ENCODE measurements at regions of chr17 and their contacts with region 1.

Region 1: GRCh38 chr17:27293898-27294688 is at the start of gene WSB1:
- DNase-seq: peak; percentile 89
- H3K4me3 Mint-ChIP-seq: peak within 1 kb of the TSS; percentile 89
- H3K27ac Mint-ChIP-seq: peak within 1 kb of the TSS; percentile 96
- H3K4me1 Mint-ChIP-seq: peaks cover 12% of the 10 kb centered on the region
- H3K27me3 Mint-ChIP-seq: no peaks in the 10 kb centered on the region
- CTCF ChIP-seq: no peak
- total RNA-seq, gene WSB1: 93.1 and 145 TPM in 2 replicates

Region 2: DNA sequence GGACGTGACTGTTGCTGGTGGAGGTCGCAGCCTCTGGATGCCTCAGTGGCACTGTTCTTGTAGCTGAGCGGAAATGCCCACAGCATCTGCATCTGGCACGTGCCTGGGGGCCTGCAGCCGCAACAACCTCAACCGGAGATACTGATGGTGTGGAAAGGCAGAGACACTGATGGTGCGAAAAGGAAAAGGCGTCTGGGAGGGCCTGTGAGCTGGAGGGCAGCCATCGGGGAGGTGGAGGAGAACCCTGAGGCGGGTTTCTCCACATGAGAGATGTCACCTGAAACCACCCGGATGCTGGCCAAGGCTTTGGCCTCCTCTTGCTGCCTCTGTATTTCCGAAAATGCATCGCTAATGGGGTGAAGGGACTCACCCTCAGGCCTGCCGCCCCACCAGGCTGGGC is 285.0 kb before region 1 on chr17:
- CTCF ChIA-PET with region 1: no interaction called
- POLR2A ChIA-PET with region 1: no interaction called
- intact Hi-C with region 1: no loop called
- DNase-seq: no peak
- H3K4me3 Mint-ChIP-seq: no peak overlapping the region
- H3K27ac Mint-ChIP-seq: no peak overlapping the region
- H3K4me1 Mint-ChIP-seq: no peaks in the 10 kb centered on the region
- H3K27me3 Mint-ChIP-seq: no peaks in the 10 kb centered on the region
- CTCF ChIP-seq: no peak

Region 3: GRCh38 chr17:27206447-27206846 is 87.6 kb before region 1 on chr17:
- CTCF ChIA-PET with region 1: no interaction called
- POLR2A ChIA-PET with region 1: interaction called, 21 read pairs
- intact Hi-C with region 1: no loop called
- DNase-seq: peak; percentile 21
- H3K4me3 Mint-ChIP-seq: no peak overlapping the region
- H3K27ac Mint-ChIP-seq: no peak overlapping the region
- H3K4me1 Mint-ChIP-seq: peaks cover 13% of the 10 kb centered on the region
- H3K27me3 Mint-ChIP-seq: no peaks in the 10 kb centered on the region
- CTCF ChIP-seq: no peak

Region 4: GRCh38 chr17:27256225-27257030 is 37.7 kb before region 1 on chr17:
- CTCF ChIA-PET with region 1: interaction called, 4 read pairs
- POLR2A ChIA-PET with region 1: interaction called, 47 read pairs
- intact Hi-C with region 1: no loop called
- DNase-seq: peak; percentile 54
- H3K4me3 Mint-ChIP-seq: no peak overlapping the region
- H3K27ac Mint-ChIP-seq: no peak overlapping the region
- H3K4me1 Mint-ChIP-seq: peaks cover 8% of the 10 kb centered on the region
- H3K27me3 Mint-ChIP-seq: no peaks in the 10 kb centered on the region
- CTCF ChIP-seq: no peak

Region 5: DNA sequence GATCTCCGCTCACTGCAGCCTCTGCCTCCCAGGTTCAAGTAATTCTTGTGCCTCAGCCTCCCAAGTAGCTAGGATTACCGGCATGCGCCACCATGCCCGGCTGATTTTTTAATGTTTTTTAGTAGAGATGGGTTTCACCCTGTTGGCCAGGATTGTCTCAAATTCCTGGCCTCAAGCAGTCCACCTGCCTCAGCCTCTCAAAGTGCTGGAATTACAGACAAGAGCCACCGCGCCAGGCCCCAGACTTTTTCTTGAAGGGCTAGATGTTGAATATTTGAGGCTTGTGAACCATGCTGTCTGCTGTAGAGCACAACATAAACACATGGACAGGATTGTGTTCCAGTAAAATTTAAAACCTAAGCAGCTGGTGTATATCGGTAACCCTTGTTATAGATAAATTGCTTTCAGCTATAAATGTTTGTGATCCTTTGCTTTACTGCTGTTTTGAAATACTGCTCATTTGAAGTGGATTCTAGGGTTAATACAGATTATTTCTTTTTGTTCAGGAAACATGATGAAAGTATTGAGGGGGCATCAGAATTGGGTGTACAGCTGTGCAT is 12.3 kb after region 1 on chr17:
- CTCF ChIA-PET with region 1: interaction called, 3 read pairs
- POLR2A ChIA-PET with region 1: interaction called, 53 read pairs
- intact Hi-C with region 1: no loop called
- DNase-seq: no peak
- H3K4me3 Mint-ChIP-seq: no peak overlapping the region
- H3K27ac Mint-ChIP-seq: no peak overlapping the region
- H3K4me1 Mint-ChIP-seq: peaks cover 14% of the 10 kb centered on the region
- H3K27me3 Mint-ChIP-seq: no peaks in the 10 kb centered on the region
- CTCF ChIP-seq: no peak

Region 6: DNA sequence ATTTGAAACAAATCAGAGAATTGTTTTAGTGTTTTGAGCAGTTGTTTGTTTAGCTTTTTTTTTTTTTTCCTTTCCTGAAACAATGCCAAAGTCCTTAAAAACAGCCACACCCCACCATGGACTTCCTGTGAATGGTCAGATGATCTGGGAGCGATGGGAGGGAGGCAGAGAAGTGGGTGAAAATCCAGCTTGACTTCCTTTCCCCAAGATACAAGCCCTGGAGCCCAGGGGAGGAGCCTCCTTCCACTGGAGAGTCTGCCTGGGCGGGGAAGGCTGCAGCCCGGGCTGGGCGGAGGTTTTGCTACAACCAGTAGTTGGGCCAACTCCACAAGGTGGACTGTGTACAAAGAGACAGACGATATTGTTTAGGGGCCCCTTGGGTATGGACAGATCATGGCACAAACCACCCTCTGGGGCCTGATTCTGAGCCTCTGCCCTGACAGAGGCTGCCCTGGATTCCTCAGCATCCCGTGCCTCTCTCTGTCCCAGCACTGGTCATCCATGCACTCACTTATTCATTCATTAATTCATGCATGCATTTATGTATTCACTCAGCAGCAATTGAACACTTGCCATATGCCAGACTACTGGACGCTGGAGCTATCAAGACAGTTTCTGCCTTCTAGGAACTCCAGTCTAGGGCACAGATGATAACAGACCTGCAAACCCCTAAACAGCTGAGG is 29.6 kb after region 1 on chr17:
- CTCF ChIA-PET with region 1: interaction called, 5 read pairs
- POLR2A ChIA-PET with region 1: interaction called, 33 read pairs
- intact Hi-C with region 1: no loop called
- DNase-seq: peak; percentile 52
- H3K4me3 Mint-ChIP-seq: no peak overlapping the region
- H3K27ac Mint-ChIP-seq: peak overlapping the region; percentile 75
- H3K4me1 Mint-ChIP-seq: peaks cover 29% of the 10 kb centered on the region
- H3K27me3 Mint-ChIP-seq: no peaks in the 10 kb centered on the region
- CTCF ChIP-seq: no peak